GM10248 (cell line): ENCODE measurements at regions of chr13 and their contacts with region 1.

Region 1: GRCh38 chr13:95403828-95404522 is 102.7 kb upstream of the ABCC4 start:
- DNase-seq: peak; percentile 88
- CTCF ChIP-seq: peak; percentile 93

Region 2: DNA sequence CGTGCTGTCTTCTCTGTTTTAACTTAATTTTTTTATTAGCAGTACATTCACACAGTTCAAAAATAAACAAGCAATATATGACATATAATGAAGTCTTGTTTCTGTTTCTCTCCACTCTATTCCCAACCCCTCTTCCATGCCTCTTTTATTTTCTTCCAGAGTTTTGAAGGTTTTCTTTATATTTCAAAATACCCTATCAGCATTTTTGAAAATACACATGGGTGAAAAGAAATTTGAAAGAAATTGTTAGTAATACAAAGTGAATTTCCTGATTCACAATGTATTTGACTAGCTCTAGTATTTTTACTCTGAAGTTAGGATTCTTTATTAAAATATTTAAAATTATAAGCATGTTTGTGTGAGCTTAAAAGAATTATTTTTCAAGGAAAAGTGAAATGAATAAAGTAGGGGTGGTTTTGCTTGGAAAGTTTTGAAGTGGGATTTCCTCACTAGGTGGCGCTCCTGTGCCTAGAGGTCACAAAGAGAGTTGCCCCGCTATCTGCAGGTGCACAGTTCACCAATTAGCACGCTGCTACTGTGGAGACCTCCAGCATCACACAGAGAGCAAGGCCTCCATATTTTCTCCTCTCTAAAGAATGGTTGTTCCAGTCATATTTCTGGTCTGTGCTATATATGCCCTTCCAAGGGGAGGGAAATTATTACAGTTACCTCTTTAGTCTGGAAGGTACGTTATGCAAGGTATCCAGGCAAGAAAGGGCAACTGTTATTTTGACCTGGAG is 729.2 kb before region 1 on chr13:
- CTCF ChIA-PET with region 1: interaction called, 11 read pairs
- POLR2A ChIA-PET with region 1: no interaction called
- DNase-seq: peak; percentile 48
- CTCF ChIP-seq: peak; percentile 59

Region 3: DNA sequence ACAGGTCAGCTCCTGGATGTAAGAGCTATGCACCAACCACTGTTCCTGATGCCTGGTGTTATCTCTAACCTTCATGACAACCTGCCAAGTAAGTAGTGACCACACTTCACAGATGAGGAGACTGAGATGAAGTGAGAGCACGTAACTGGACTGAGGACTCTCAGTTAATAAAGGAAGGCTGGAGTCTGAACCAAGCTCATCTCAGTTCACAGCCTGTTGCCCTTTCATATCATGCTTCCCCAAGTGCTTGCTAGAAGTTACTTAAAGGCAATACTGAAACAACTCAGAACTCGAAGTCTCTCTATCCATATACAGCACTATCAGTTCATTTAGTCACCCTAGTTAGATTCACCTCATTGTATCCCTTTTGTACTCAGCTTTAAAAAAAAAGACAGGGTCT is 222.4 kb before region 1 on chr13:
- CTCF ChIA-PET with region 1: interaction called, 663 read pairs
- POLR2A ChIA-PET with region 1: no interaction called
- DNase-seq: peak; percentile 44
- CTCF ChIP-seq: no peak

Region 4: DNA sequence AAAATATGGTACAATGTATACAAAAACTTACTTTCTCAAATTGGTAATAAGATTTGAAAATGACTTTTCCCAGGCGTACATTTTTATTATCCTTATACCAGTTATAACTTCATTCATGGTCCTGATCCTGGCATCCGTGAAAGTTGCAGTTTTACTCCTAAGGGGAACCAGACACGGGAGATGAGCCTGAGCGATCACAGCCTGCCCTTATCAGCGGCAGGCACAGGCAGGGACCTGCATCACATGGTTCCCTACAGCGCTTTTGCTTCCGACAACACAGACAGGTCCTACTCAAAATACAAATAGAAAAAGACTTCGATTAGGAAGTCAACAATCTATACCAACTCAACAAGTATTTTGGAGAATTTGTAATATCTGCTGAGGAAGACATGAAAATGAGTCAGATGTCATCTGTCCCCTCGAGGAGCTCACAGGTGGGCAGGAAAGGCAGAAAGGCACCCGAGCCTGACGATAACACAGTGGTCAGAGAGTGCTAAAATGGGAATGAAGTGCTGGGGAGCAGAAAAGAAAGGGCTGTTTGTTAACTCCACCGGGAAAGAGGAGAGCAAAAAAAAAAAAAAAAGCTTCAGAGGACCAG is 196.1 kb before region 1 on chr13:
- CTCF ChIA-PET with region 1: interaction called, 18 read pairs
- POLR2A ChIA-PET with region 1: no interaction called
- DNase-seq: peak; percentile 28
- CTCF ChIP-seq: no peak

Region 5: DNA sequence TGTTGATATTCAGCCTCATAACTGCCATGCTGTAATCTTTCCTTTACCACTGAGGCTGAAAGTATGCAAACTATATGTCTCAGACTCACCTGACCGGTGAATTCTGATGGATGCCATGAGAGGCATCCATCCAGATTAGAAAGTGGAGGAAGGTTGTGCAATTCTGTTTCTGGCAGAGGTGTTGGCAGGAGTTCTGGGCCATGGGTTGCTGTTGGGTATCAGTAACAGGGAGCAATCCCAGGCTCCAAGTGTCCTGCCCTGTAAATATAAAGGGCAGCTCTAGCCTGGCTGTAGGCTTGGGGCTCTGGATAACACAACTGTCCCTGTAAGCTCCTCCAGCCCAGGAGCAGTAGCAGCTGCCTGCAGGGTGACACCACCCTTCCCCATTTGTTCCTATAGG is 25.4 kb before region 1 on chr13:
- CTCF ChIA-PET with region 1: interaction called, 96 read pairs
- POLR2A ChIA-PET with region 1: no interaction called
- DNase-seq: no peak
- CTCF ChIP-seq: no peak

Region 6: GRCh38 chr13:95420501-95420900 is 16.5 kb after region 1 on chr13:
- CTCF ChIA-PET with region 1: interaction called, 46 read pairs
- POLR2A ChIA-PET with region 1: no interaction called
- DNase-seq: no peak
- CTCF ChIP-seq: no peak

Region 7: DNA sequence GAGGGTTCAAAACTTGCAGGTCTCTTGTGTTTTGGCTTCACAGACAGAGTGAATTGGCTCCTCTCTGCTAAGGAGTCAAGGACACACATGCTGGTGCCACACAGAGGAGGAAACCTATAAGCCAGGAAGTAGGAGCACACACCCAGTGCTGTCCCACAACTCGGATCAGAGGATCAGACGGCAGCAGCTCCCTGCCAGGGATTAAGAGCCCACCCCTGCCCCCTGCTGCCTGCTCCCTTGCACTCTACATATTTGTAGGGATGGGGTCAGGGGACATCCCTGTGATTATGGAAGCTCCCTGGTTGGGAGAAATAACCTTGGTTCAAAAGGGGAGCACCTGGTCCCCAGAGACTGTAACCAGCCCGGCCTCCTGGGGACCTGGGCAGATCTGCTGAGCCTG is 71.0 kb after region 1 on chr13:
- CTCF ChIA-PET with region 1: interaction called, 37 read pairs
- POLR2A ChIA-PET with region 1: no interaction called
- DNase-seq: no peak
- CTCF ChIP-seq: no peak